Head of caudate nucleus (tissue), 42 donors: ENCODE measurements at regions of chr20 and their contacts with region 1.

Region 1: GRCh38 chr20:5788385-5788895 is 38.2 kb downstream of the SHLD1 start:
- DNase-seq: peak; percentile 34 to 94 (median 82)

Region 2: DNA sequence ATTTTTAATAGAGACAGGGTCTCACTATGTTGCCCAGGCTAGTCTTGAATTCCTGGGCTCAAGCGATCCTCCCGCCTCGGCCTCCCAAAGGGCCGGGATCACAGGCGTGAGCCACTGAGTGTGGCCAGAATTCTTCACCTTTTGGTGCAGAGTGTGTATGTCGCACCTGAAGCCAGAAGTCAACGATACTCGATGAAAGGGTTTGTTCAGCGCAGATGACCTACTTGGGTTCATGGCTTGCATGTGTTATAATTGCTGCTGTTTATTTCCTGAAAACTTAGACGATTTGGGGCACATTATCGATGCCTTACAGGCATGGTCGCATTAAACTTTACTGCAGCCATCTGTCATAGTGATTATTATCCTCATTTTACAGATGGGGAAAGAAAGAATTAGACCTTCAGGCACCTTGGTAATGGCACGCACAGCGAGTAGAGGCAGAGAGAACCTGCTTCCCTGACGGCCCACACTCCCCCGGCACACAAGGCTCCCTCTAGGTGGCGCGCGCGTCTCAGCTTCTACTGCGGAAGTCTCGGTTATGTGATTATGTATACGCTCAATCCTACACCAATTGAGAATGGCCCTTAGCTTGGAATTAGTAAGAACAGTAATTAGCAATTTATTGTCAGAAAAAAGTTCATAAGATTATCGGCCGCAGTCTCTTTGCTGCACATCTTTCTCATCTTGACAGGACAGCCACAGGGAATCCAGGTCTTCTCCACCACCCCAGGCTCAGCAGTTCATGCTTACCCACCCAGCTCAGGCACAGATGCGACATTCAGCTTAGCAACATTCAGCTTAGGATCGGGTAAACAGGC is 258.9 kb before region 1 on chr20:
- intact Hi-C with region 1: loop called (anchors 2 kb)
- DNase-seq: peak; percentile 80 to 95 (median 89)

Region 3: GRCh38 chr20:5569021-5569420 is 219.4 kb before region 1 on chr20:
- intact Hi-C with region 1: loop called (anchors 10 kb)
- DNase-seq: peak in 28 of 42 donors; percentile 18 to 76 (median 49)

Region 4: DNA sequence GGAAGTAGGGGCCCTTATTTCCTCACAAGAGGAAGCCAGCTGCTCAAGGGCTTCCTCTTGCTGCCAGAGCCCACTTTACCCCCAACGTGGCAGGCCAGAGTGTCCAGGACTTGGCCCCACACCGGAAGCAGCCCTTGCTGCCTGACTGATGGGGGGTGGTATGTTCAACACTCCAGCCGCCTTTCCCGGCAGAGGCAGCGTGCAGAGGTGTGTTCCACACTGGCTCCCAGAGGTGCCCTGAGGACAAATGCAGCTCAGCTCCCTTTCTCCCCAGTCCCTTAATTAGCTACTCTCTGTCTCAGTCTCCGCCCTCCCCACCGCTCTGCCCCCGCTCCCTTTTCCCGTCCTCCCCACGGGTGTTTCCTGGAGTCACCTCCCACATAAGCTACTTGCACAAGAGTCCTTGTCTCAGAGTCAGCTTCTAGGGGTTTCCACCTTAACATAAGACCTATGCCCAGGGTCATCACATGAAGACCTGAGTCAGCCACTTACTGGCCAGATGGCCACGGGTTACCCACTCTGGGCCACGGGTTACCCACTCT is 99.9 kb before region 1 on chr20:
- intact Hi-C with region 1: no loop called
- DNase-seq: peak; percentile 21 to 90 (median 72)